MCF 10A (cell line): ENCODE measurements at regions of chr9 and their contacts with region 1.

Region 1: GRCh38 chr9:131739980-131740648 is at the start of gene RAPGEF1:
- DNase-seq: peak; percentile 42
- H3K4me3 Mint-ChIP-seq: peak within 1 kb of the TSS; percentile 85
- H3K27ac Mint-ChIP-seq: peak within 1 kb of the TSS; percentile 82
- H3K4me1 Mint-ChIP-seq: peaks cover 18% of the 10 kb centered on the region
- H3K27me3 Mint-ChIP-seq: no peaks in the 10 kb centered on the region
- CTCF ChIP-seq: peak; percentile 96
- total RNA-seq, gene RAPGEF1: 55.4 and 73.0 TPM in 2 replicates

Region 2: DNA sequence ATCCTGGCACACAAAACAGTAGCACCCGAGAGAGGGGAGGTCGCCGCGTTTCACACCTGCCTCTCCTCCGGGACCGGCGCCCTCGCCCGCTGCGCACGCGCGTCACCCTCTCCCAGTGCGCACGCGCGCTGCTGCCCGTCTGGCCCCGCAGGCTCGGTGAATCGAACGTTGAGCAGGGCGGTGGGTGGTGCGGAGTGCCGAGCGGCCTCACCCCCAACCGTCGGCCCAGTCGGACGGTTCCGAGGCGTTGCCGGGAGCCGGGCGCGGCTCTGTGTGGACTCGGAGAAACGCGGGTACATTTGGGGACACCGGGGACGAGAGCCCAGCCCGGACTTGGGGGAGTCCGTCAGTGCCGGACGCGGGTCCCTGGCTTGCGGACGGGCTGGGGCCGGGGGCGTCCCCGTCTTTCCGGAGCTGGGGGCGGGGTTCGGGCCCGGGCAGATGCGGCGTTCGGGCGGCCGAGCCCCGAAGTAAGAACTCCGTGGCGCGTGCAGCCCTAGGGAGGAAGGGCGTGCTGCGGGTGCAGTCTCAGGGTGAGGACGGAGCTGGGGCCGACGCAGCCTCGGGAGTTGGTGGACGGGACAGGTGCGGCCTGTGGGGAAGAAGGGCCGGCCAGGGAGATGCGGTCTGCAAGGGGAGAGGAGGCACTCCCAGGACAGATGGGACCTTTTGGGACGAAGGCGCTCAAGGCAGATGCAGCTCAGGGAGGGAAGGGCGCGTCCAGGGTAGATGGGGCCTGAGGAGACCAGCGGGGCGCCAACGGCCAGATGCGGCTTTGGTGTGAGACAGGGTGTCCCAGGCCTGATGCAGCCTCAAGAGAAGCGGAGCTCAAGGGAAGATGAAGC is 237.1 kb before region 1 on chr9 and contains the start of gene POMT1:
- CTCF ChIA-PET with region 1: interaction called, 4 read pairs
- POLR2A ChIA-PET with region 1: interaction called, 3 read pairs
- intact Hi-C with region 1: loop called (anchors 10 kb)
- DNase-seq: peak; percentile 87
- H3K4me3 Mint-ChIP-seq: peak within 1 kb of the TSS; percentile 86
- H3K27ac Mint-ChIP-seq: peak within 1 kb of the TSS; percentile 84
- H3K4me1 Mint-ChIP-seq: peaks cover 15% of the 10 kb centered on the region
- H3K27me3 Mint-ChIP-seq: no peaks in the 10 kb centered on the region
- CTCF ChIP-seq: no peak
- total RNA-seq, gene POMT1: 19.7 and 24.5 TPM in 2 replicates

Region 3: GRCh38 chr9:131608493-131609037 is 131.5 kb before region 1 on chr9:
- CTCF ChIA-PET with region 1: interaction called, 43 read pairs
- POLR2A ChIA-PET with region 1: interaction called, 41 read pairs
- intact Hi-C with region 1: loop called (anchors 1 kb)
- DNase-seq: peak; percentile 84
- H3K4me3 Mint-ChIP-seq: peak overlapping the region; percentile 54
- H3K27ac Mint-ChIP-seq: peak overlapping the region; percentile 73
- H3K4me1 Mint-ChIP-seq: peaks cover 29% of the 10 kb centered on the region
- H3K27me3 Mint-ChIP-seq: no peaks in the 10 kb centered on the region
- CTCF ChIP-seq: no peak

Region 4: DNA sequence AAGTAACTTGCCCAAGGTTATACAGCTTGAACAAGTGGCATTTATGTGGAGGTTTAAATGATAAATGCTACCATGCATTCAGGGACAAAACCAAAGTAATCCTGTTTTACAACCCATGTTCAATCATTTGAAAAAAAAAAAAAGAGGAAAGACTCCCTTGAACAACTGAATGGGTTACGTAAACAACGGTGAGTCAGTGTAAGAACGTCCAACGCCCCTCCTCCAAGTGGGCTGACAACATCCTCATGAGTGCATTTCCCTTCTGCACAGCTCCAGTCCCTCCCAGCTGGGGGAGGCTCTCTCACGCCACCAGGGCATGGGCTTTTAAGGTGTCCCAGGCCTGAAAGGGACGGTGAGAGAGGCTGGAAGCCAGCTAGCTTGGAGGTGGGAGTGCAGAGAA is 104.8 kb before region 1 on chr9:
- CTCF ChIA-PET with region 1: interaction called, 7 read pairs
- POLR2A ChIA-PET with region 1: interaction called, 10 read pairs
- intact Hi-C with region 1: no loop called
- DNase-seq: peak; percentile 97
- H3K4me3 Mint-ChIP-seq: no peak overlapping the region
- H3K27ac Mint-ChIP-seq: peak overlapping the region; percentile 77
- H3K4me1 Mint-ChIP-seq: peaks cover 30% of the 10 kb centered on the region
- H3K27me3 Mint-ChIP-seq: no peaks in the 10 kb centered on the region
- CTCF ChIP-seq: no peak

Region 5: DNA sequence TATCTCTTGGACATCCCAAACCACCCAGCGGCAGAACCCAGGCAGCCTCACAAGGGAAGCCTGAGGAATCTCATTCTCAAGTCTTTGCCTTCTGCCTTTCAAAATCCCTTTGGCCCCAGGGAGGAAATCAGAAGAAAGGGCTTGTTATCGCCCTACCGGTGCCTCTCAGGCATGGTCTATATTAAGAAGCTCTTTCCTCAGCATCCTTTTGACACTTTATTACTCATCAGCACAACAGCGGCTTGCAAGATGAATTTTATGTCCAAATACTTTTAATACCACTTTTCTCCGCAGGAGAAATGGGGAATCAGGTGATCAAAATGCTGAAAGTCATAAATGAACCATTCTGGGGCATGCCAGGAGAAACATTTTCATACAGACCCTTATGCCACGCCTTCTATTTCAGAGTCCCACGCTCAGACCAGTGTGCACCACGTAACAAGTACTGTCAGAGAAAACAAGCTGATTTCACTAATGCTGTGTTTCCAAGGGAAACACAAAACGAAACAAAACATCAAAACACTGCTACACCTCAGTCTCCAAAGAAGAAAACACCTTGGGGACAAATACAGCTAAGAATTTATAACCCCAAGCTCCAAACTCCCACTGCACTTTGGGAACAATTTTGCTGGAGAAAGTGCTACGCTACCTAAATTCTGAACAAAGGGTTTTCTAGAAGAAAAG is 30.2 kb before region 1 on chr9:
- CTCF ChIA-PET with region 1: interaction called, 4 read pairs
- POLR2A ChIA-PET with region 1: interaction called, 12 read pairs
- intact Hi-C with region 1: no loop called
- DNase-seq: peak; percentile 17
- H3K4me3 Mint-ChIP-seq: no peak overlapping the region
- H3K27ac Mint-ChIP-seq: peak overlapping the region; percentile 67
- H3K4me1 Mint-ChIP-seq: peaks cover 38% of the 10 kb centered on the region
- H3K27me3 Mint-ChIP-seq: no peaks in the 10 kb centered on the region
- CTCF ChIP-seq: no peak